ENCODE measurements at regions of chr6 and their contacts with region 1.

Region 1: GRCh38 chr6:144215932-144216667 is 65.8 kb downstream of the STX11 start:
- DNase-seq: peak; percentile 87
- ATAC-seq: peak; percentile 85
- H3K4me3 Mint-ChIP-seq: peak overlapping the region; percentile 97
- H3K27ac Mint-ChIP-seq: peak overlapping the region; percentile 100
- H3K4me1 Mint-ChIP-seq: peaks cover 36% of the 10 kb centered on the region
- H3K27me3 Mint-ChIP-seq: peaks cover 2% of the 10 kb centered on the region
- CTCF ChIP-seq: no peak

Region 2: DNA sequence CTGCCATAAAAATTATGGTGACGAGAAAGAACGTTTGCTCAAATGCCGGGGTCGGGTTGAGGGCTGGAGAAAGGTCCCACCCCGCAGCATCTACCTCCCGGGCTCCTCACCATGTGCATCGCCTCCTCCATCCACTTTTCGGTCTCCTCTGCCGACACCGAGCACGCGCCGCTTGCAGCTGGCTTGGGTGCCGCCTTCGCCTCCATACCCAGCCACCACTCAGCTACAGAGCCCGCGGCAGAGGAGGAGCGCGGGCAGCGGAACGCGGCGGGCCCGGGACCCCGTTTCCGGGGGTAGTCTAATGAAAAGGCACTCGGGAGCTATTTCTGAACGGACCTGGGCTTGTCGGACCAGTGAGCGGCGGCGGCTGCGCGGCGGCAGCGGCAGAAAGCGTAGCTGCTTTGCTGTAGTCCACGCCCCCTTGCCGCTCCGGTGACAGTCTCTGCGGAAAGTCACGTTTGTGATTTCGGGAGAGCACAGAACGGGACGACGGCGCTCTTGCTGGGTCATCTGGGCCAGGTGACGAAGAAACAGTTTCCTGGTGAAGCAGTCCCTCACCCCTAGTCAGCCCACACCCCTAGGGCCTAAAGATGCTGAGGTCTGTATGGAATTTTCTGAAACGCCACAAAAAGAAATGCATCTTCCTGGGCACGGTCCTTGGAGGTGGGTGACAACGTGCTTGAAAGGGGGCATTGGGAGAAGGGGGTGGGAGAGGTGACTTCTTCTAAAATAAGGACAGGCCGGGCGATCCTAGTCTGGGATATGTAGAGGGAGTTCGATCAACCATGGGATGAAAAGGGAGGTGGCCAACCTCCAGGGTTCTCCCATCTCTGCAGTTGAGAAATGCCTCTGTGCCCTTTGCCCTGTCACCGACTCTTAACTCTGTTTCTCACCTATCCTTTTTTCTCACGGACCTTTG is 765.4 kb before region 1 on chr6 and contains the starts of genes ADAT2 and PEX3:
- CTCF ChIA-PET with region 1: no interaction called
- POLR2A ChIA-PET with region 1: no interaction called
- intact Hi-C with region 1: loop called (anchors 2 kb)
- DNase-seq: peak; percentile 90
- ATAC-seq: peak; percentile 91
- H3K4me3 Mint-ChIP-seq: peak within 1 kb of the TSS; percentile 98
- H3K27ac Mint-ChIP-seq: peak within 1 kb of the TSS; percentile 96
- H3K4me1 Mint-ChIP-seq: peaks cover 39% of the 10 kb centered on the region
- H3K27me3 Mint-ChIP-seq: no peaks in the 10 kb centered on the region
- CTCF ChIP-seq: no peak
- total RNA-seq, gene ADAT2: 22.4 and 30.2 TPM in 2 replicates
- total RNA-seq, gene PEX3: 21.7 and 26.5 TPM in 2 replicates

Region 3: GRCh38 chr6:143940011-143940597 is 276.0 kb before region 1 on chr6:
- CTCF ChIA-PET with region 1: interaction called, 11 read pairs
- POLR2A ChIA-PET with region 1: no interaction called
- intact Hi-C with region 1: loop called (anchors 1 kb)
- DNase-seq: no peak
- ATAC-seq: peak; percentile 98
- H3K4me3 Mint-ChIP-seq: no peak overlapping the region
- H3K27ac Mint-ChIP-seq: no peak overlapping the region
- H3K4me1 Mint-ChIP-seq: no peaks in the 10 kb centered on the region
- H3K27me3 Mint-ChIP-seq: no peaks in the 10 kb centered on the region
- CTCF ChIP-seq: no peak

Region 4: GRCh38 chr6:144104898-144105487 is 111.1 kb before region 1 on chr6:
- CTCF ChIA-PET with region 1: interaction called, 49 read pairs
- POLR2A ChIA-PET with region 1: interaction called, 12 read pairs
- intact Hi-C with region 1: loop called (anchors 1 kb)
- DNase-seq: no peak
- ATAC-seq: peak; percentile 95
- H3K4me3 Mint-ChIP-seq: no peak overlapping the region
- H3K27ac Mint-ChIP-seq: no peak overlapping the region
- H3K4me1 Mint-ChIP-seq: no peaks in the 10 kb centered on the region
- H3K27me3 Mint-ChIP-seq: no peaks in the 10 kb centered on the region
- CTCF ChIP-seq: no peak

Region 5: GRCh38 chr6:144234935-144235334 is 18.8 kb after region 1 on chr6:
- CTCF ChIA-PET with region 1: no interaction called
- POLR2A ChIA-PET with region 1: no interaction called
- intact Hi-C with region 1: no loop called
- DNase-seq: no peak
- ATAC-seq: no peak
- H3K4me3 Mint-ChIP-seq: no peak overlapping the region
- H3K27ac Mint-ChIP-seq: no peak overlapping the region
- H3K4me1 Mint-ChIP-seq: no peaks in the 10 kb centered on the region
- H3K27me3 Mint-ChIP-seq: no peaks in the 10 kb centered on the region
- CTCF ChIP-seq: no peak

Region 6: GRCh38 chr6:144265390-144265789 is 49.3 kb after region 1 on chr6:
- CTCF ChIA-PET with region 1: interaction called, 4 read pairs
- POLR2A ChIA-PET with region 1: no interaction called
- intact Hi-C with region 1: loop called (anchors 1 kb)
- DNase-seq: no peak
- ATAC-seq: peak; percentile 97
- H3K4me3 Mint-ChIP-seq: no peak overlapping the region
- H3K27ac Mint-ChIP-seq: peak overlapping the region; percentile 63
- H3K4me1 Mint-ChIP-seq: peaks cover 23% of the 10 kb centered on the region
- H3K27me3 Mint-ChIP-seq: no peaks in the 10 kb centered on the region
- CTCF ChIP-seq: no peak

Region 7: DNA sequence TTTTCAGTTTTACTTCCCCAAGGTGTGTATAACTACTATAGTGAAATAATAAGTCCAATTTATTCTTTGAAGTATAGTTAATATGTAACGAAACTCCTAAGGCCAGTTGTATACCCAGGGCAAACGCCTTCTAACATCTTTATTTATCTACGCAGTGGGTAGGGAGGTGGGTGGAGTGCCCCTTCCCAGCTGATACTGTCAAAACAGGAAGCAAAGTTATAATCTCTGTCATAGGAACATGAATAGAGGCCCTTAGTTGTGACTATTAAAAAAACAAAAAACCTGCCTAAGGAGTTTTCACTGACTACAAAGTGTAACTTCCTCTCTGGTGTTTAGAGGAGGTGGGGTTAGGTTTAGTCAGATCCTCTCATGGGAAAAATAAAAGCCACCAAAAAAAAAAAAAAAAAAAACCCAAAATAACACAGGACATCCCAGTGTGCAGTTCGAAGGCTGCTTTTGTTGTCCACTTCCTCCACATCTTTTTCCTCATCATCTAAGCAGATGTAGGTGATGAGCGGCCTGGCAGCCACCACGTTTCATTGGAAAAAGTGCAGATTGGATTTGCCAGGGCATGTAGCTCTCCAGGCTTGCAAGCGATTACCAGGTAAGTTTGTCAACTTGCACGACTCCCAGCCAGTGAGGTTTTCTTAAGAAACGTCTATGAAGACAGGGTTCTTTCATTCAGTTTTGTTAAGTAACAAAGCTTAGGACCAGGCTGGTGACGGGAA is 127.8 kb after region 1 on chr6:
- CTCF ChIA-PET with region 1: no interaction called
- POLR2A ChIA-PET with region 1: interaction called, 4 read pairs
- intact Hi-C with region 1: loop called (anchors 2 kb)
- DNase-seq: no peak
- ATAC-seq: peak; percentile 80
- H3K4me3 Mint-ChIP-seq: peak overlapping the region; percentile 93
- H3K27ac Mint-ChIP-seq: peak overlapping the region; percentile 97
- H3K4me1 Mint-ChIP-seq: peaks cover 98% of the 10 kb centered on the region
- H3K27me3 Mint-ChIP-seq: no peaks in the 10 kb centered on the region
- CTCF ChIP-seq: no peak

Region 8: DNA sequence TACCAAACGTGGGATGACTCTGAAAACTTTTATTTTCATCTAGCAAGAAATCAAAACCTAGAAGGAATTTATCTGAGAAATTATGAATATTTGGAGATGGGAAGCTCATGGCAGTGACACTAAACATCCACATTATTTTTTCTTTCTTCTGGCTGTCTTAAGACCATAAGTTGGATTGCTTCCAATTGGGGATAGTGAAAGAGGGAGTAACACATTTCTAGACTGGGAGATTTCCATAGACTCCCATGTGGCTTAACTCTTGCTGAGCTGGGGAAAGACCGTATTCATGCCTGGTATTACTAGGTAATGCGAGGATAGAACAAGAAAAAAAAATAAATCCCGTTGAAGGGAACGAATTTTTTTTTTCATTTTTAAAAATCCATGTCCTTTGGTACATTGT is 189.1 kb after region 1 on chr6:
- CTCF ChIA-PET with region 1: no interaction called
- POLR2A ChIA-PET with region 1: no interaction called
- intact Hi-C with region 1: no loop called
- DNase-seq: no peak
- ATAC-seq: no peak
- H3K4me3 Mint-ChIP-seq: no peak overlapping the region
- H3K27ac Mint-ChIP-seq: no peak overlapping the region
- H3K4me1 Mint-ChIP-seq: peaks cover 23% of the 10 kb centered on the region
- H3K27me3 Mint-ChIP-seq: no peaks in the 10 kb centered on the region
- CTCF ChIP-seq: no peak

Region 9: GRCh38 chr6:145814501-145815308 is 1598.6 kb after region 1 on chr6 and contains the start of gene FBXO30:
- CTCF ChIA-PET with region 1: no interaction called
- POLR2A ChIA-PET with region 1: no interaction called
- intact Hi-C with region 1: loop called (anchors 5 kb)
- DNase-seq: peak; percentile 97
- ATAC-seq: peak; percentile 91
- H3K4me3 Mint-ChIP-seq: peak within 1 kb of the TSS; percentile 95
- H3K27ac Mint-ChIP-seq: peak within 1 kb of the TSS; percentile 92
- H3K4me1 Mint-ChIP-seq: peaks cover 33% of the 10 kb centered on the region
- H3K27me3 Mint-ChIP-seq: no peaks in the 10 kb centered on the region
- CTCF ChIP-seq: no peak
- total RNA-seq, gene FBXO30: 5.8 and 6.1 TPM in 2 replicates

Measured in activated B cell treated with CpG ODN at 0.5 μM for 24 hours (primary cell).